ENCODE measurements at regions of chr9 and their contacts with region 1.

Region 1: DNA sequence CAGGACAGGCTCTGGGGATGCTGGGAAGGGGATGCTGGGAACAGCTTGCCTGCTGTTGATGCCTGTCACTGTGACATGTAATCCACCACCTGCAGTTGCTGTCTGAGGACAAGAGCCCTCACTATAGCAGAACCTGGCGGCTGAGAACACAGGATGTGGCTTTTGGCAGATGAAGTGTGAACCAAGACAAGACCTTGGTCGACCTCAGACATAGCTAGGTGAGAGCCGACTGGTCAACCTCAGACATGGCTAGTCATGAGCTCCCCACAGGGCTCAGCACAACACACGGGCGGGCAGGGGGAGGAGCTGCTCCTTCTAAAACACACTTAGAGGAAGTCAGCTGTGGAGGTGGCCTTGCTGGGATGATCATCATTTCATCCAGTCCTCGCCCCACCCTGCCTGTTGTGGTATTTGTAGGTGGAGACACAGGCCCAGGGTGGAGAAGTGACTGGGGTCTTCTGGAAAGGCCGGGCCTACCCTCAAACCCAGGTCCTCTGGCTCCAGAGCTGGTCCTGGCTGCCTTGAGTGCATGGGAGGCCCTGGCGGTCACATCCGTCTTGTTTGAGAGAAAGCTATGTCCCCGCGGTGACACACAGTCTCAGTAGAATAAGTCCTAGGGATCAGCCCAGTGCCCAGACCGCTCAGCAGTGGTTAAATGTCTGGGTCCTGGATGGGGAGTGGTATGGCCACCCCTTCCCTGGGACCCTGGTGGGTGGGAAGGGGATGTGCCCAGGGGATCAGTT is 6.1 kb downstream of the SUSD3 start:
- DNase-seq: peak; percentile 93 to 99 (median 99)
- H3K4me3 ChIP-seq: peak overlapping the region in 2 of 7 experiments; percentile 37 to 40
- H3K27ac ChIP-seq: peak overlapping the region; percentile 13 to 65
- H3K4me1 ChIP-seq: peaks cover 8 to 78% (median 70%) of the 10 kb centered on the region in 4 experiments
- H3K27me3 ChIP-seq: no peaks in the 10 kb centered on the region

Region 2: GRCh38 chr9:93051680-93052089 is 12.9 kb before region 1 on chr9:
- CTCF ChIA-PET with region 1: interaction called, 16 read pairs
- POLR2A ChIA-PET with region 1: no interaction called
- DNase-seq: no peak
- H3K4me3 ChIP-seq: no peak overlapping the region
- H3K27ac ChIP-seq: no peak overlapping the region
- H3K4me1 ChIP-seq: peaks cover 4 to 29% (median 11%) of the 10 kb centered on the region in 4 experiments
- H3K27me3 ChIP-seq: no peaks in the 10 kb centered on the region

Region 3: DNA sequence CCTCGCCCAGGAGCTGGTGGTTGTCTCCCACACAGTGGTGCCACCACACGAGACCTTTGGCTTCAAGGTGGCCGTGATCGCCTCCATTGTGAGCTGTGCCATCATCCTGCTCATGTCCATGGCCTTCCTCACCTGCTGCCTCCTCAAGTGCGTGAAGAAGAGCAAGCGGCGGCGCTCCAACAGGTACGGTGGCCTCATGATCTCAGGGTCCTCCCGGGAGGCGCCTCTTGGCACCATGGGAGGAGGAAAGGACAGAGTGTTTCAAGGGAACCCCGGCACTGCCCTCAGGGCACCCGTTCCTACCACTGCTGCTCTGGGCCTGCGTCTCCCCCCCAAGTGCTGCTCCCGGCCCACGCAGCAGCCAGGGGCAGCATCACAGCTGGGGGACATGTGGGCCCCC is 13.2 kb after region 1 on chr9:
- CTCF ChIA-PET with region 1: interaction called, 28 read pairs
- POLR2A ChIA-PET with region 1: interaction called, 3 read pairs
- DNase-seq: no peak
- H3K4me3 ChIP-seq: no peak overlapping the region
- H3K27ac ChIP-seq: no peak overlapping the region
- H3K4me1 ChIP-seq: peaks cover 0 to 32% (median 21%) of the 10 kb centered on the region in 4 experiments
- H3K27me3 ChIP-seq: no peaks in the 10 kb centered on the region

Region 4: GRCh38 chr9:93098236-93098946 is 33.8 kb after region 1 on chr9:
- CTCF ChIA-PET with region 1: interaction called, 8 read pairs
- POLR2A ChIA-PET with region 1: interaction called, 13 read pairs
- DNase-seq: peak; percentile 94 to 99 (median 99)
- H3K4me3 ChIP-seq: peak overlapping the region; percentile 80 to 98 (median 91)
- H3K27ac ChIP-seq: peak overlapping the region; percentile 84 to 88
- H3K4me1 ChIP-seq: peaks cover 11 to 66% (median 62%) of the 10 kb centered on the region in 4 experiments
- H3K27me3 ChIP-seq: no peaks in the 10 kb centered on the region

Measured in common myeloid progenitor, CD34-positive (primary cell).